ENCODE measurements at regions of chr4 and their contacts with region 1.

Region 1: DNA sequence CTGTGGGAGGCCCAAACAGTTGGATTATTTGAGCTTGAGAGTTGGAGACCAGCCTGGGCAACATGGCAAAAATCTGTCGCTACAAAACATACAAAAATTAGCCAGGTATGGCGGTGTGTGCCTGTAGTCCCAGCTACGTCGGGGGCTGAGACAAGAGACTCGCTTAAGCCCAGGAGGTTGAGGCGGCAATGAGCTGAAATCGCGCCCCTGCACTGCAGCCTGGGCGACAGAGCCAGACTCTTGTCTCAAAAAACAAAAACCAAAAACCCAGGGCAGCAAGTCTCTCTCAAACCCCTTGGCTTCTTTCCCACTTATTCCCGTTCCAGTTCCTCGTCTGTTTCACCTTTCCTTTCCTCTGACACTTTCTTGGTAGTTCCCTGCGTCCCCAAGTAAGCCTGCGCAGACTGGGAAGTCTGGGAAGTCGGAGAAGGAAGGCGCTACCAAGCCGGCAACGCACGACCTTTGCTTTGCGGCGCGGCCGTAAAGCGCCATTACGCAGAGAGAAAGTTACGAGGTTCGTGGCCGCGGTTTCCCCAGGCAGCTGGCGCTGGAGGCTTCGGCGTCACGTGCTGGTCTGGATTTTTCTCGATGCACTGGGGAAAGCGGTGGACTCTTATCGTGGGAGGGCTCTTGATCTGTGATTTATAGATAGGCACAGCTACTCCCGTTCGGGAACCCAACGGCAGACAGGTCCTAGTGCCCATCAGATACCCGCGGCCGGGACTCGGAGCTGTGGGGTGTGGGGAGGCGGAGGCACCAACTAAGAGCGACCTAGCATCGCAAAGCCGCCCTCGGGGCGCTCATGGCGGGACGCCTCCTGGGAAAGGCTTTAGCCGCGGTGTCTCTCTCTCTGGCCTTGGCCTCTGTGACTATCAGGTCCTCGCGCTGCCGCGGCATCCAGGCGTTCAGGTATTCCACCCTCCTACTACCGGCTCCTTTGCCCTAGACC is at the start of gene NUDT9:
- DNase-seq: peak; percentile 81 to 95
- ATAC-seq: peak; percentile 94 to 97
- H3K4me3 ChIP-seq: peak within 1 kb of the TSS; percentile 84
- H3K27ac ChIP-seq: peak within 1 kb of the TSS; percentile 90 to 95
- H3K4me1 ChIP-seq: peaks cover 42% of the 10 kb centered on the region
- CTCF ChIP-seq: no peak
- EP300 ChIP-seq: no peak
- POLR2A ChIP-seq: peak; percentile 52
- RAD21 ChIP-seq: no peak
- polyA plus RNA-seq, gene NUDT9: 29.9 and 44.0 TPM in 2 replicates

Region 2: GRCh38 chr4:87204559-87204958 is 217.8 kb before region 1 on chr4:
- CTCF ChIA-PET with region 1: no interaction called
- POLR2A ChIA-PET with region 1: no interaction called
- DNase-seq: no peak
- ATAC-seq: no peak
- H3K4me3 ChIP-seq: no peak overlapping the region
- H3K27ac ChIP-seq: no peak overlapping the region
- H3K4me1 ChIP-seq: no peaks in the 10 kb centered on the region
- CTCF ChIP-seq: no peak
- EP300 ChIP-seq: no peak
- POLR2A ChIP-seq: no peak
- RAD21 ChIP-seq: no peak

Region 3: GRCh38 chr4:87390891-87391575 is 31.3 kb before region 1 on chr4 and contains the start of gene HSD17B11:
- CTCF ChIA-PET with region 1: interaction called, 3 read pairs
- POLR2A ChIA-PET with region 1: interaction called, 28 read pairs
- DNase-seq: peak; percentile 92 to 94
- ATAC-seq: peak; percentile 98 to 99
- H3K4me3 ChIP-seq: peak within 1 kb of the TSS; percentile 69
- H3K27ac ChIP-seq: peak within 1 kb of the TSS; percentile 90 to 93
- H3K4me1 ChIP-seq: peaks cover 7% of the 10 kb centered on the region; the same call in 1 of the 3 replicates
- CTCF ChIP-seq: no peak
- EP300 ChIP-seq: no peak
- POLR2A ChIP-seq: peak; percentile 54
- RAD21 ChIP-seq: no peak
- polyA plus RNA-seq, gene HSD17B11: 85.2 and 113 TPM in 2 replicates

Region 4: GRCh38 chr4:87433342-87433741 is 11.0 kb after region 1 on chr4:
- CTCF ChIA-PET with region 1: no interaction called
- POLR2A ChIA-PET with region 1: no interaction called
- DNase-seq: no peak
- ATAC-seq: no peak
- H3K4me3 ChIP-seq: no peak overlapping the region
- H3K27ac ChIP-seq: no peak overlapping the region
- H3K4me1 ChIP-seq: no peaks in the 10 kb centered on the region
- CTCF ChIP-seq: no peak
- EP300 ChIP-seq: no peak
- POLR2A ChIP-seq: no peak
- RAD21 ChIP-seq: no peak

Measured in A549 (cell line).